HepG2 (cell line): ENCODE measurements at regions of chr20 and their contacts with region 1.

Region 1: GRCh38 chr20:46411637-46412036 is 5.2 kb upstream of the ELMO2 start:
- DNase-seq: peak; percentile 50
- ATAC-seq: no peak
- H3K4me3 ChIP-seq: no peak overlapping the region
- H3K27ac ChIP-seq: no peak overlapping the region
- H3K4me1 ChIP-seq: peaks cover 52% of the 10 kb centered on the region
- H3K27me3 ChIP-seq: peaks cover 2 to 22% of the 10 kb centered on the region in 2 experiments; a peak in 3 of 5 replicates
- CTCF ChIP-seq: peak; percentile 25; the same call in 1 of the 2 replicates
- EP300 ChIP-seq: no peak
- POLR2A ChIP-seq: no peak
- RAD21 ChIP-seq: no peak

Region 2: GRCh38 chr20:46438156-46438750 is 26.6 kb after region 1 on chr20:
- CTCF ChIA-PET with region 1: no interaction called
- POLR2A ChIA-PET with region 1: no interaction called
- in situ Hi-C with region 1: no loop called
- intact Hi-C with region 1: loop called (anchors 1 kb)
- DNase-seq: peak; percentile 50
- ATAC-seq: peak; percentile 95
- H3K4me3 ChIP-seq: no peak overlapping the region
- H3K27ac ChIP-seq: no peak overlapping the region
- H3K4me1 ChIP-seq: no peaks in the 10 kb centered on the region
- H3K27me3 ChIP-seq: peaks cover 2 to 6% of the 10 kb centered on the region in 2 experiments; a peak in 4 of 5 replicates
- CTCF ChIP-seq: peak; percentile 75
- EP300 ChIP-seq: no peak
- POLR2A ChIP-seq: no peak
- RAD21 ChIP-seq: peak; percentile 56